Activated CD8-positive, alpha-beta T cell treated with anti-CD3 and anti-CD28 coated beads for 36 hours (primary cell): ENCODE measurements at regions of chr6 and their contacts with region 1.

Region 1: DNA sequence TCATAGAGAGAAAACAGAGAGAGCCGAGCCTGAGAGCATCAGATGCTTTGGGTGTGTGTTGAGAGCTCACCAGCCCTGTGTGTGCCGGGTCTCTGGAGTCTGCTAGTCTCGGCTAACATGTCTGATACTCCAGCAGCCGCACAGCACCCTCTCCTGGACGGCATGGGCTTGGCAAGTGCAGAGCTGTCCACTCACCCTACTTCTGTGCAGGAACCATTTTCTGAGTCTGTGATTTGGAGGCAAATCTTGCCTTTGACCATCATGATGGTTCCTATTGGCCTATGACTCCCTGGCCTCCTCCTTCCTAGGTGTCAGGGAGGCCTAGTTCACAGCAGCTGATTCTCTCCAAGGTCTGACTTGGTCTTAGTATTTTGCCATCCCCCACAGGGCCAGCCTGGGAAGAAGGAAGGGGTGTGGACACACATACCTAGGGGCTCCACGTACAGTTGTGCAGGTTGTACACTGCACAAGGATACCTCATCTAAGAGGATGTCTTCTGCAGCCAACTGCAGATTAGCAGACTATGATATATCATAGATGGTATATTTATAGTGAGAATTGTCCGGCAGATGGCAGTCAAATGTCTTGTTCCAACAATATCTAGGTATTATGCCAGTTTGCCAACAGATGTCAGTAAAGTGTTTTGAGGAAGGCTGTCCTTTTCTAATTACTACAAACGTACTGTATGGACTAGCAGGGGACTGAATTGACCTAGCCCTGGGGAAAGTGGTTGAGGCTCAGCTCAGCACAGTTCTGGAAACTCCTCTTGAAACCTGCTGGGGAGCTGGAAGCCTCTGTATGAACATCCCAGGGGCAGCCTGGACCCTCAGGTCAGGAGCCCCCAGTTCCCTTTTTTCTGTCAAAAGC is 13.0 kb downstream of the FGD2 start:
- DNase-seq: peak; percentile 96
- ATAC-seq: peak; percentile 95
- H3K4me3 Mint-ChIP-seq: peak overlapping the region; percentile 26
- H3K27ac Mint-ChIP-seq: peak overlapping the region; percentile 66
- H3K4me1 Mint-ChIP-seq: peaks cover 40% of the 10 kb centered on the region
- H3K27me3 Mint-ChIP-seq: no peaks in the 10 kb centered on the region
- CTCF ChIP-seq: peak; percentile 99

Region 2: GRCh38 chr6:36851149-36851614 is 167.2 kb before region 1 on chr6:
- CTCF ChIA-PET with region 1: interaction called, 31 read pairs
- POLR2A ChIA-PET with region 1: no interaction called
- intact Hi-C with region 1: no loop called
- DNase-seq: peak; percentile 40
- ATAC-seq: no peak
- H3K4me3 Mint-ChIP-seq: no peak overlapping the region
- H3K27ac Mint-ChIP-seq: no peak overlapping the region
- H3K4me1 Mint-ChIP-seq: peaks cover 7% of the 10 kb centered on the region
- H3K27me3 Mint-ChIP-seq: no peaks in the 10 kb centered on the region
- CTCF ChIP-seq: peak; percentile 94

Region 3: DNA sequence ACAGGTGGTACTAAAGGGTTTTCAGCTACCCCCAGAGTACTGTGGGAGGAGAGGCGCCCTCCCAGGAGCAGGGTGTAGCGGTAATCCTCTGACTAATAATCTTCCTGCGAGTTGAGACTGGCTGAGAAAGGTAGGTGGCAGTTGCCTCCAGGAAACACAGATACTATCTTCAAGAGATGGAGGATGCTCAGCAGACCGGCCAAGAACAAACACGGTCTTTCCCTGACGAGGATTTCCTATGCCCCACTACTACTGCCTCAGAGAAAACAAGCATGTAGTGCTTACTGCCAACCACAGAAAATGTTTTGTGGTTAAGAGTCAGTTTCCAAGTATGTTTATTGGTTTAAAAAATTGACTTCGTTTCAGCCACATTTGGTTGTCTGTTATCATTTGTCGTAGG is 105.8 kb before region 1 on chr6:
- CTCF ChIA-PET with region 1: interaction called, 25 read pairs
- POLR2A ChIA-PET with region 1: no interaction called
- intact Hi-C with region 1: no loop called
- DNase-seq: peak; percentile 81
- ATAC-seq: peak; percentile 88
- H3K4me3 Mint-ChIP-seq: peak overlapping the region; percentile 41
- H3K27ac Mint-ChIP-seq: peak overlapping the region; percentile 84
- H3K4me1 Mint-ChIP-seq: peaks cover 45% of the 10 kb centered on the region
- H3K27me3 Mint-ChIP-seq: no peaks in the 10 kb centered on the region
- CTCF ChIP-seq: no peak

Region 4: GRCh38 chr6:36933102-36933501 is 85.3 kb before region 1 on chr6:
- CTCF ChIA-PET with region 1: no interaction called
- POLR2A ChIA-PET with region 1: no interaction called
- intact Hi-C with region 1: no loop called
- DNase-seq: no peak
- ATAC-seq: no peak
- H3K4me3 Mint-ChIP-seq: no peak overlapping the region
- H3K27ac Mint-ChIP-seq: no peak overlapping the region
- H3K4me1 Mint-ChIP-seq: no peaks in the 10 kb centered on the region
- H3K27me3 Mint-ChIP-seq: no peaks in the 10 kb centered on the region
- CTCF ChIP-seq: no peak

Region 5: GRCh38 chr6:37029249-37029971 is 11.0 kb after region 1 on chr6:
- CTCF ChIA-PET with region 1: interaction called, 91 read pairs
- POLR2A ChIA-PET with region 1: interaction called, 11 read pairs
- intact Hi-C with region 1: no loop called
- DNase-seq: peak; percentile 70
- ATAC-seq: peak; percentile 25
- H3K4me3 Mint-ChIP-seq: no peak overlapping the region
- H3K27ac Mint-ChIP-seq: peak overlapping the region; percentile 67
- H3K4me1 Mint-ChIP-seq: peaks cover 65% of the 10 kb centered on the region
- H3K27me3 Mint-ChIP-seq: no peaks in the 10 kb centered on the region
- CTCF ChIP-seq: peak; percentile 58

Region 6: DNA sequence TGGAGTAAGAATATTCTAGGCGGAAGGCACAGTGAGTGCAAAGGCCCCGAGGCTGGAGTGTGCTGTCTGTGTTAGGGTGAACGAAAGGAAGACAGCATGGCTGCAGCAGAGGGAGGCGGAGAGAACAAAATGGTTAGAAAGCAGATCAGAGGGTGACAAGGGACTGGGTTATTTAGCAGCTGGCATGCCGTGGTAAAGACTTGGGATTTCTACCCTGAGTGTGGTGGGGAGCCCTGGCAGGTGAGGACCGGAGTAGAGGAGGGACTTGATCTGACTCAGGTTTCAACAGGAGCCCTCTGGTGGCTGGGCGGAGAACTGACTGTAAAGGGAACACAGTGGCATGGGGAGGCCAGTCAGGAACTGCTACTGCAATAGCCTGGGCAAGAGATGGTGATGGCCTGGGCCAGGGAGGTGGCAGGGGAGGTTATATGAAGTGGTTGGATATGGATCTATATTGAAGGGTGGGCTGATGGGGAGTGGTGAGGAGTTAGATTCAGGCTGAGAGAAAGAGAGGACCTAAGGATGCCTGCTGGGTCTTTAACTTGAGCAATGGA is 189.5 kb after region 1 on chr6:
- CTCF ChIA-PET with region 1: interaction called, 784 read pairs
- POLR2A ChIA-PET with region 1: interaction called, 15 read pairs
- intact Hi-C with region 1: loop called (anchors 1 kb)
- DNase-seq: peak; percentile 97
- ATAC-seq: peak; percentile 76
- H3K4me3 Mint-ChIP-seq: no peak overlapping the region
- H3K27ac Mint-ChIP-seq: peak overlapping the region; percentile 86
- H3K4me1 Mint-ChIP-seq: peaks cover 65% of the 10 kb centered on the region
- H3K27me3 Mint-ChIP-seq: no peaks in the 10 kb centered on the region
- CTCF ChIP-seq: peak; percentile 93

Region 7: GRCh38 chr6:37761554-37762263 is 743.3 kb after region 1 on chr6:
- CTCF ChIA-PET with region 1: no interaction called
- POLR2A ChIA-PET with region 1: no interaction called
- intact Hi-C with region 1: no loop called
- DNase-seq: no peak
- ATAC-seq: no peak
- H3K4me3 Mint-ChIP-seq: no peak overlapping the region
- H3K27ac Mint-ChIP-seq: no peak overlapping the region
- H3K4me1 Mint-ChIP-seq: no peaks in the 10 kb centered on the region
- H3K27me3 Mint-ChIP-seq: peaks cover 2% of the 10 kb centered on the region
- CTCF ChIP-seq: no peak